SK-N-SH (cell line): ENCODE measurements at regions of chr7 and their contacts with region 1.

Region 1: GRCh38 chr7:129343099-129343700 is 91.0 kb upstream of the STRIP2 start:
- DNase-seq: peak; percentile 64
- H3K4me3 ChIP-seq: no peak overlapping the region
- H3K27ac ChIP-seq: no peak overlapping the region
- H3K4me1 ChIP-seq: peaks cover 0 to 6% of the 10 kb centered on the region in 2 experiments; a peak in 1 of 4 replicates
- H3K27me3 ChIP-seq: no peaks in the 10 kb centered on the region
- CTCF ChIP-seq: peak; percentile 98
- EP300 ChIP-seq: no peak
- RAD21 ChIP-seq: peak; percentile 81

Region 2: DNA sequence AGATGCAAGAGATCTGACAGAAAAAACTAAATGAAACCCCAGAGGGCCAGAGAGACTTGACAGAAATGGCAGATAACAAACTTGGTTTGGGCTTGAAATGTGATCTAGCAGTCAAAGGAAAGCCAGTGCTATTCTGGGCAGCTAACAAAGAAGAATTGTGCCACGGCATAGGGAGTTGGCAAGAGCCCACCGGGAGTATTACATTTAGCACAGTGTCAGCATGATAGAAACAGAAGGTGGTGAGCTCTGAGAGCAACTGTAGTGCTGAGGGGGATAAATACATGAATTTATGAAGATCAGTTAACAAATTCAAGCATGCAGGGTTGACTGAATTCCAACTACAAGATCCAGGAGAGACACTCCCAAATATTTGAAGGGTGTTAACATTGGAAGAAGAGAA is 27.2 kb before region 1 on chr7:
- CTCF ChIA-PET with region 1: interaction called, 38 read pairs
- POLR2A ChIA-PET with region 1: no interaction called
- DNase-seq: no peak
- H3K4me3 ChIP-seq: no peak overlapping the region
- H3K27ac ChIP-seq: no peak overlapping the region
- H3K4me1 ChIP-seq: no peaks in the 10 kb centered on the region
- H3K27me3 ChIP-seq: no peaks in the 10 kb centered on the region
- CTCF ChIP-seq: no peak
- EP300 ChIP-seq: no peak
- RAD21 ChIP-seq: no peak

Region 3: GRCh38 chr7:129332284-129333035 is 10.7 kb before region 1 on chr7:
- CTCF ChIA-PET with region 1: interaction called, 45 read pairs
- POLR2A ChIA-PET with region 1: no interaction called
- DNase-seq: no peak
- H3K4me3 ChIP-seq: no peak overlapping the region
- H3K27ac ChIP-seq: peak overlapping the region in 1 of 2 experiments; percentile 80; a peak in 2 of 4 replicates
- H3K4me1 ChIP-seq: no peaks in the 10 kb centered on the region
- H3K27me3 ChIP-seq: no peaks in the 10 kb centered on the region
- CTCF ChIP-seq: no peak
- EP300 ChIP-seq: no peak
- RAD21 ChIP-seq: no peak

Region 4: DNA sequence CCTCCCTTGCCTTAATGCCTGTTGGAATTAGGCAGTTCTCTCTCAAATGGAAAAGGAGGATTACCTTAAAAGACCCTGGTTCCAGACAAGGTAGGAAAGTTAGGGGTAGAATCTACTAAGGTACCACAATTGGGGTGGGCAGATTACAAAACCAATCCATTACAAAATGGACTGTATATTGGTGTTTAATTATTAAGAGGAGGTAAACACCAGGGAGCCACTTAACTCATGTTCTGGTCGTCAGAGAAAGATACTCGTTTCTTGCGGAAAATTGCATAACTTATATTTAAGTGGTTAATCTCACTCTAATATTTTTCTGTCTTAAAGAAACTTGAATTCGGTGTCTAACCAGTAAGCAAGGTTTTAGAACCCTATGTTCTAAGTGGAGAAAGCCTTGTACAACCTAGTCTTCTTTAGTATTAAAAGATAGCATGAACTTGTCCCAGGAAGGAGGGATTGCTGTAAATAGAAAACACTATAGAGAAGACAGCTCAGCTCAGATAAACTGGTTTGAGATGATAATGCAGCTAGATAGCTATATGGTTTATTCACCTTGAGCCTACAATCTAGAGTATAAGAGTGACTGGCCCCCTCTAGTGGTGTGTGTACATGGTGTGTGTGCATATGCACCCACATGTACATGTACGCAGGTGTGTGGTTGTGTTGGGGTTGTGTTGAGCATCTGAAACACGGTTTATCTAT is 33.0 kb after region 1 on chr7:
- CTCF ChIA-PET with region 1: interaction called, 83 read pairs
- POLR2A ChIA-PET with region 1: no interaction called
- DNase-seq: peak; percentile 52
- H3K4me3 ChIP-seq: no peak overlapping the region
- H3K27ac ChIP-seq: no peak overlapping the region
- H3K4me1 ChIP-seq: no peaks in the 10 kb centered on the region
- H3K27me3 ChIP-seq: no peaks in the 10 kb centered on the region
- CTCF ChIP-seq: peak; percentile 74
- EP300 ChIP-seq: no peak
- RAD21 ChIP-seq: peak; percentile 49

Region 5: DNA sequence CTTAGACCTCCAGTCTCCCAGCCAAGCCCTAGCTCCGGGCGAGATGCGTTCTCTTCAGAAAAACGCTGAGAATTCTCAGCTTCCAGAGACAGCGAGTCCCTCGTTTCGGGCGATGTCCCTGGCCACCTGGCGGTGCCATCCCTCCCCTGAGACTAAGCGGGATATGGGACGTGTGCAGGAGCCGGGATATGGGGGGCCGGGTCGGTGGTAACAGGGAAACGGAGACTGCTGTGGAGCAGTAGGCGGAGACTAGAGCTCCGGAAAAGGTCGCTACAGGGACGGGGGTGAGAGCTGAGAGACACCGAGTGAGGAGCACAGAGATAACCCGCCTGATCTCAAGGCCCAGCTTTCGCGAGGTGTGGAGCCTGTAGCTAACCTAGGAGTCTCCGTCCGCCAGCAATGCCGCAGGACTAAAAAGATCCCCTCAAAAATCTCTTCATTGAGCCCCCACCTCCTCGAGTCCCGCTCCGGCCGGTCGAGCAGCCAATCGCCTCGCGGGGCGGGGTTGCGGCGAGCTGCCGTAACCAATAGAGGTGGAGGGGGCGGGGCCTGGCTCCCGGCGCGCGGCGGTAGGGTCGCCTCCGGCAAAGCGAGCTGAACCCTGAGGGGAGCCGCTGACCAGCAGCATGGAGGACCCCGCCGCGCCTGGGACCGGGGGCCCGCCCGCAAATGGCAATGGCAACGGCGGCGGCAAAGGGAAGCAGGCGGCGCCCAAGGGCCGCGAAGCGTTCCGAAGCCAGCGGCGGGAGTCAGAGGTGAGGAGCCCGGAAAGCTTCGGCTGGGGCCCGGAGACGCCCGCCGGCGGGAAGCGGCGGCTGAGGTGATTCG is 90.9 kb after region 1 on chr7 and contains the start of gene STRIP2:
- CTCF ChIA-PET with region 1: interaction called, 11 read pairs
- POLR2A ChIA-PET with region 1: no interaction called
- DNase-seq: peak; percentile 97
- H3K4me3 ChIP-seq: peak within 1 kb of the TSS; percentile 85 to 93
- H3K27ac ChIP-seq: peak within 1 kb of the TSS; percentile 39 to 81; a peak in 3 of 4 replicates
- H3K4me1 ChIP-seq: peaks cover 7 to 15% of the 10 kb centered on the region in 2 experiments; a peak in 3 of 4 replicates
- H3K27me3 ChIP-seq: no peaks in the 10 kb centered on the region
- CTCF ChIP-seq: peak; percentile 44
- EP300 ChIP-seq: no peak; a peak in 1 of 4 replicates
- RAD21 ChIP-seq: peak; percentile 11; the same call in 1 of the 2 replicates
- polyA plus RNA-seq, gene STRIP2: 4.9 and 6.9 TPM in 2 replicates

Region 6: DNA sequence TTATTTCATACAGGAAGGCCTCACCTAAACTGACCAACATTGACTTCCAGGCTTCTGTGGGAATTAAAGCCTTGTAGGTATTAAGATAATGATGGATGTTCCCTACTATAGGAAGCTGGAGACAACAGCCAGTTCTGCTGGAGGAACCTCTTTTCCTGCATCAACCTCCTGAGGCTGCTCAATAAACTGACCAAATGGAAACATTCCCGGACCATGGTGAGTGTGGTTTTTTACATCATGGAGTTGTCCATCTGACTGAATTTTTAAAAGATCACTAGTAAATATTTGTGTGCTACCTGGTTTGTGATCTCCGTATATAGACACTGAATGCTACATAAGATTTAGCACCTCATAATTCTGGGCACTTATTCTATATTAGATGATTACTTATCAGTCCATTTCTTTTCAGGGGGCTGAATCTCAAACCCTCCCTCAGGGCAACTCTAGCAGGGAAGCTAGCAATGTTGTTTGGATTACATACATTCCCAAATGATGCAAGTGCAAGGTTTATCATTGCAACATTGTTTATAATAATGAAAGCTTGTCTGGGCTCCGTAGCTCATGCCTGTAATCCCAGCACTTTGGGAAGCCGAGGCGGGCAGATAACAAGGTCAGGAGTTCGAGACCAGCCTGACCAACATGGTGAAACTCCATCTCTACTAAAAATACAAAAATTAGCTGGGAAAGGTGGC is 137.6 kb after region 1 on chr7:
- CTCF ChIA-PET with region 1: interaction called, 22 read pairs
- POLR2A ChIA-PET with region 1: no interaction called
- DNase-seq: no peak
- H3K4me3 ChIP-seq: no peak overlapping the region
- H3K27ac ChIP-seq: no peak overlapping the region
- H3K4me1 ChIP-seq: no peaks in the 10 kb centered on the region
- H3K27me3 ChIP-seq: no peaks in the 10 kb centered on the region
- CTCF ChIP-seq: no peak
- EP300 ChIP-seq: no peak
- RAD21 ChIP-seq: no peak

Region 7: GRCh38 chr7:129514683-129515082 is 171.5 kb after region 1 on chr7:
- CTCF ChIA-PET with region 1: no interaction called
- POLR2A ChIA-PET with region 1: no interaction called
- DNase-seq: no peak
- H3K4me3 ChIP-seq: no peak overlapping the region
- H3K27ac ChIP-seq: no peak overlapping the region
- H3K4me1 ChIP-seq: no peaks in the 10 kb centered on the region
- H3K27me3 ChIP-seq: no peaks in the 10 kb centered on the region
- CTCF ChIP-seq: no peak
- EP300 ChIP-seq: no peak
- RAD21 ChIP-seq: no peak

Region 8: GRCh38 chr7:129644634-129645230 is 301.5 kb after region 1 on chr7:
- CTCF ChIA-PET with region 1: interaction called, 27 read pairs
- POLR2A ChIA-PET with region 1: no interaction called
- DNase-seq: peak; percentile 53
- H3K4me3 ChIP-seq: no peak overlapping the region
- H3K27ac ChIP-seq: no peak overlapping the region
- H3K4me1 ChIP-seq: peaks cover 2 to 9% of the 10 kb centered on the region in 2 experiments; a peak in 2 of 4 replicates
- H3K27me3 ChIP-seq: no peaks in the 10 kb centered on the region
- CTCF ChIP-seq: peak; percentile 84
- EP300 ChIP-seq: no peak
- RAD21 ChIP-seq: peak; percentile 89